Right ventricle myocardium superior (tissue), 1 donor: ENCODE measurements at regions of chr16 and their contacts with region 1.

Region 1: GRCh38 chr16:74813109-74813641 is 38.6 kb upstream of the FA2H start:
- DNase-seq: peak; percentile 82
- ATAC-seq: peak; percentile 99

Region 2: GRCh38 chr16:74633686-74634085 is 179.5 kb before region 1 on chr16:
- intact Hi-C with region 1: no loop called
- DNase-seq: no peak
- ATAC-seq: no peak

Region 3: DNA sequence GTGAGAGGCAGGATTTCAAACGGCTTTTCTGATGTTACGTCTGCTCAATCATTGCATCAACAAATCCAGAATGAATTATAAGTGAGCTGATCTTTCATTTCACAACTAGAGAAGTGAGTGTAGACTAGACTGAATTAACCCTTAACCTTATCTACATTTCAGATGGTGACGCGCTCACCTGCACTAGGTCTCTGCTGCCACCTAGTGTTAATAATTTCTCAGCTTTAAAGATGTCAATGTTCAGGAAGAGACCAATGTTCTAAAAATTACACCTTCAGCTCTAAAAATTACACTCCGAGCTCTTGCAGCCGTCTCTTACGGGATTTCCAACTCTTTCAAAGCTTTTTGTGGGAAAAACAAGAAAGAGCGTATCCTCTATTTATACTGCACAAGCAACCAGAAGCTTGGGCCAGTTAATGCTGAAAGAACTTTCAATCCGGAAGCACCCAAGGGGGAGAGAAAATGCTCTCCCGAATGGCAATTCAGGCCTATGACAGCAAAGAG is 49.6 kb after region 1 on chr16:
- intact Hi-C with region 1: loop called (anchors 10 kb)
- DNase-seq: no peak
- ATAC-seq: no peak

Region 4: DNA sequence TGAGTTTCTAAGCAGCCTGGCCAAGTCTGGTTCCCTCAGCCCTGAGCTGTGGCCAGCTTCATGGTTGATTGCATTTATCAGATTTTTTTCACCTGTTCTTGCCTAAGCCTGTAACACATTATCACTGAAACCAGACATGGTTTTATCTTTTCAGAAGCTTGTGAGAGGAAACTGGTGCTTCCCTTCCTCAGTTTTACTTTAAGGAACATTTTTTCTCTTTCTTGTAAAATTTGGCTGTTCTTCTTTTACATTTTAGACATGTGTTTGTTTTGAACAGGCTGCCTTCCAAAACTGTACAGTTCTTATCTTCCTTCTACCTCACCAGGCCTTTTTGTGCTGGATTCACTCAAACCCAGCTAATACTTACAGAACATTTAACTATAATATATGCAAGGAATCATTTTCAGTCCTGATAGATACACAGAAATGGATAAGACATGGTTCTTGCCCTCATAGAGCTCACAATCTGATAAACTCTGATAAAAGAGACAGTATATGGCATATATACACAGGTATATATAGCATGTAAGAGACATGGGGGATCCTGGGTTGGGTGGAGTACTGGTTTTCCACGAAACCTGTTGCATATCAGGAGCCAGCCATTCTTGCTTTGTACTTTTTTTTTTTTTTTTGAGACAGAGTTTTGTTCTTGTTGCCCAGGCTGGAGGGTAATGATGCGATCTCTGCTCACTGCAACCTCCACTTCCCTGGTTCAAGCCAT is 230.2 kb after region 1 on chr16:
- intact Hi-C with region 1: no loop called
- DNase-seq: no peak
- ATAC-seq: no peak